WTC11 (cell line): ENCODE measurements at regions of chr11 and their contacts with region 1.

Region 1: GRCh38 chr11:78228467-78228866 is 39.7 kb downstream of the USP35 start:
- DNase-seq: no peak
- ATAC-seq: peak; percentile 96
- H3K4me3 Mint-ChIP-seq: no peak overlapping the region
- H3K27ac Mint-ChIP-seq: no peak overlapping the region
- H3K4me1 Mint-ChIP-seq: no peaks in the 10 kb centered on the region
- H3K27me3 Mint-ChIP-seq: no peaks in the 10 kb centered on the region
- CTCF ChIP-seq: no peak

Region 2: DNA sequence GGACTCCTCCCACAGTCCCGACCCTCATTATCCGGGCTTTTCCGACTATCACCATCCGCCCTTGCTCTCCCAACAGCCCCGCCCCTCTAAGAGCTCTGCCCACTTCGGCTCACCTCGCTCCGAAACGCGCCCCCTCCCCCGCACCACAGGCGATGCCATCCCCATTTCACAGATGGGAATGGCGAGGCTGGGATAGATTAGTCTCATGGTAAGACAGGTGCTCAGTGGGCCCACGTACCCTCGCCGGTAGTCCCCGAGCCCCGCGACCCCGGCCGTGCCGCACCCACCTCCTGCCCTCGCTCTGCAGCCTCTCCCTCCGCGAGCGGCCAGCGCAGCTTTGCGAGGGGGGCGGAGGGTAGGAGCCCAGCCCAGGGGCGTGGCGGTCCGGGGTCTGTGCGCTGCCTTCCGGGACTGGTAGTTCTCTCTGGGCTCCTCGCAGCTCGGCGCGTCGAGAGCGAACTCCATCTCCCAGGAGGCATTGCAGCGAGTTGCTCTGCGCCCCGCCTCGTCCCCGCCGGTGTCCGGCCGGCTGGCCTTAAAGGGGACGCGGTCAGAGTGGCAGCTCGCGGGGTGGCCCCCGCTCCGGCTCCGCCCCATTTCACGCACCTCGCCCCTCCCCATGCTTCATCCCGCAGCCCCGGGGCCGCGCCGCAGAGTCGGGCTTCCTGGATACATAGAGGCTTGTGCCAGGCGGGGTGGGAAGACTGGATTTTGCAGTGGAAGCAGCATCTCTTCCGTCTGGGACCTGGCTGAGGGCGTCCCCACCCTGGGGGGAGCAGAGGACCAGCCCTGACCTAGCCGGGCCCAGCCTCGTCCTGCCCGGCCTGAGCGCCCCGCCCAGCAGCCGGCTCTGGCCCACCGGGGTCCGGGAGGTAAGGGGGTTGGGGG is 39.9 kb before region 1 on chr11 and contains the starts of genes KCTD21 and USP35:
- CTCF ChIA-PET with region 1: interaction called, 10 read pairs
- POLR2A ChIA-PET with region 1: no interaction called
- DNase-seq: peak; percentile 97
- ATAC-seq: peak; percentile 95
- H3K4me3 Mint-ChIP-seq: peak within 1 kb of the TSS; percentile 91
- H3K27ac Mint-ChIP-seq: no peak within 1 kb of the TSS; the same call in 1 of the 2 replicates
- H3K4me1 Mint-ChIP-seq: peaks cover 23% of the 10 kb centered on the region
- H3K27me3 Mint-ChIP-seq: no peaks in the 10 kb centered on the region; the same call in 1 of the 2 replicates
- CTCF ChIP-seq: no peak
- total RNA-seq, gene KCTD21: 2.8 to 4.0 TPM (median 3.1 TPM) in 3 replicates
- total RNA-seq, gene USP35: 9.1 to 10.6 TPM (median 9.6 TPM) in 3 replicates

Region 3: GRCh38 chr11:78432058-78432515 is 203.6 kb after region 1 on chr11:
- CTCF ChIA-PET with region 1: interaction called, 20 read pairs
- POLR2A ChIA-PET with region 1: no interaction called
- DNase-seq: peak; percentile 42
- ATAC-seq: peak; percentile 41; the same call in 1 of the 2 replicates
- H3K4me3 Mint-ChIP-seq: no peak overlapping the region
- H3K27ac Mint-ChIP-seq: no peak overlapping the region
- H3K4me1 Mint-ChIP-seq: peaks cover 14% of the 10 kb centered on the region
- H3K27me3 Mint-ChIP-seq: no peaks in the 10 kb centered on the region
- CTCF ChIP-seq: no peak

Region 4: GRCh38 chr11:78564490-78565467 is 336.3 kb after region 1 on chr11:
- CTCF ChIA-PET with region 1: interaction called, 53 read pairs
- POLR2A ChIA-PET with region 1: no interaction called
- DNase-seq: no peak
- ATAC-seq: peak; percentile 24; the same call in 1 of the 2 replicates
- H3K4me3 Mint-ChIP-seq: no peak overlapping the region
- H3K27ac Mint-ChIP-seq: peak overlapping the region; percentile 1; the same call in 1 of the 2 replicates
- H3K4me1 Mint-ChIP-seq: peaks cover 25% of the 10 kb centered on the region
- H3K27me3 Mint-ChIP-seq: no peaks in the 10 kb centered on the region
- CTCF ChIP-seq: peak; percentile 51